ENCODE measurements at regions of chr7 and their contacts with region 1.

Region 1: GRCh38 chr7:134660961-134661376 is 14.3 kb downstream of the BPGM start:
- DNase-seq: no peak
- H3K4me3 ChIP-seq: no peak overlapping the region
- H3K27ac ChIP-seq: peak overlapping the region; percentile 0 to 91; a peak in 3 of 4 replicates
- H3K4me1 ChIP-seq: peaks cover 8 to 23% of the 10 kb centered on the region in 2 experiments
- H3K27me3 ChIP-seq: no peaks in the 10 kb centered on the region
- CTCF ChIP-seq: no peak
- EP300 ChIP-seq: peak in 1 of 2 experiments; percentile 29; a peak in 1 of 4 replicates
- RAD21 ChIP-seq: no peak

Region 2: GRCh38 chr7:133961724-133962123 is 699.2 kb before region 1 on chr7:
- CTCF ChIA-PET with region 1: no interaction called
- POLR2A ChIA-PET with region 1: no interaction called
- DNase-seq: no peak
- H3K4me3 ChIP-seq: no peak overlapping the region
- H3K27ac ChIP-seq: peak overlapping the region in 1 of 2 experiments; percentile 29; a peak in 2 of 4 replicates
- H3K4me1 ChIP-seq: peaks cover 0 to 31% of the 10 kb centered on the region in 2 experiments; a peak in 2 of 4 replicates
- H3K27me3 ChIP-seq: no peaks in the 10 kb centered on the region
- CTCF ChIP-seq: no peak
- EP300 ChIP-seq: no peak
- RAD21 ChIP-seq: no peak

Region 3: GRCh38 chr7:134646425-134647305 is 14.3 kb before region 1 on chr7 and contains the start of gene BPGM:
- CTCF ChIA-PET with region 1: interaction called, 28 read pairs
- POLR2A ChIA-PET with region 1: interaction called, 3 read pairs
- DNase-seq: peak; percentile 94
- H3K4me3 ChIP-seq: peak within 1 kb of the TSS; percentile 75 to 79
- H3K27ac ChIP-seq: peak within 1 kb of the TSS; percentile 80 to 81
- H3K4me1 ChIP-seq: peaks cover 11 to 15% of the 10 kb centered on the region in 2 experiments; a peak in 3 of 4 replicates
- H3K27me3 ChIP-seq: no peaks in the 10 kb centered on the region
- CTCF ChIP-seq: peak; percentile 56
- EP300 ChIP-seq: no peak
- RAD21 ChIP-seq: peak; percentile 10; the same call in 1 of the 2 replicates
- polyA plus RNA-seq, gene BPGM: 12.4 and 17.4 TPM in 2 replicates

Measured in SK-N-SH (cell line).